MCF 10A (cell line): ENCODE measurements at regions of chr18 and their contacts with region 1.

Region 1: GRCh38 chr18:49784427-49785185 is 28.7 kb downstream of the ACAA2 start:
- DNase-seq: no peak
- H3K4me3 Mint-ChIP-seq: no peak overlapping the region
- H3K27ac Mint-ChIP-seq: no peak overlapping the region
- H3K4me1 Mint-ChIP-seq: peaks cover 14% of the 10 kb centered on the region
- H3K27me3 Mint-ChIP-seq: no peaks in the 10 kb centered on the region
- CTCF ChIP-seq: peak; percentile 31

Region 2: DNA sequence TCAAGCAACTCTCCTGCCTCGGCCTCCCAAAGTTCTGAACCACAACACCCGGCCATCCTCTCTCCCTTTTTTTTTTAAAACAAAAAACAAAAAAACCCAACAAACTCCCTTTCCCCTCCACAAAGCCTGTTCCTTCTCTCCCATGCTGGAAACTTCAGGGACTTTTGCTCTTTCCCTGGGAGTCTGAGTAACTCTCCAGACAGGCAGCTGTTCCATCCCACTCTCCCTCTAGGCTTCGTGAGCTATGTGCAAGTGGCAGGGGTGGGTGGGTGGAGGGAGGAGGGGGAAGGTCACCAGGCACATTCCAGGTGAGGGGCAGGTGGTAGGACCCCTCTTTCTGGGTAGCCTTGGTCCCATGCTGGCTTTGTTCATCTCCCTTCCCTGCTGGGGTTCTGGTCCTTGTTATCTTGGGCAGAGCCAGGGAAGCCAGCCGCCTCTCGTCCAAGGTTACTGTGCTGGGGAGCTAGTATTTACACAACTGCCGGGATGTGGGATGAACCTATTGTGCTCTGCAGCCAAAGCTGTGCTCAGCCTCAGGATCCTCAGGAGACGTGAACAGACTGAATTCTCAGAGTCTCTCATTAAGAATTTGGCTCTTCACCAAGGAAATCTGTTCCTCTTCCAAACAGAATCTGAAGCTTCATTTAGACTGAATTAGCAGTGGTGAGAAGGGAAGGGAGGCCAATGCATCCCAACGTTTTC is 115.9 kb before region 1 on chr18:
- CTCF ChIA-PET with region 1: no interaction called
- POLR2A ChIA-PET with region 1: no interaction called
- intact Hi-C with region 1: no loop called
- DNase-seq: no peak
- H3K4me3 Mint-ChIP-seq: no peak overlapping the region
- H3K27ac Mint-ChIP-seq: no peak overlapping the region
- H3K4me1 Mint-ChIP-seq: peaks cover 11% of the 10 kb centered on the region
- H3K27me3 Mint-ChIP-seq: no peaks in the 10 kb centered on the region
- CTCF ChIP-seq: no peak

Region 3: DNA sequence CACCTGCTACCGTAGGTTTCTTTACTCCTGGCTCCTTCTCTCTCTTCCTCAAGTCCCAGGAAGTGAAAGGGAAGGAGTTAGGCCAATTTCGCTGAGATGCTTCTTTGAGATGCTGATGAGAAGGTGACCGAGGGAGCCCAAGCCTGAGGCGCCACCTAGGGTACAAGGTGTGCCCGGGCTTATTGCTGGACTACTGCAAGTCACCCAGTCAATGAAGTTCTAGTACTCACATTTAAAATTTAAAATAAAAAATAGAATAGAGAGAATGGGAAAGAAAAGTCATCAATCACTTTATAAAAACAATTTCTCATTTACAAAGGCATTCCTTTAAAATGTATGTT is 16.6 kb before region 1 on chr18:
- CTCF ChIA-PET with region 1: interaction called, 18 read pairs
- POLR2A ChIA-PET with region 1: no interaction called
- intact Hi-C with region 1: no loop called
- DNase-seq: peak; percentile 62
- H3K4me3 Mint-ChIP-seq: no peak overlapping the region
- H3K27ac Mint-ChIP-seq: no peak overlapping the region
- H3K4me1 Mint-ChIP-seq: no peaks in the 10 kb centered on the region
- H3K27me3 Mint-ChIP-seq: no peaks in the 10 kb centered on the region
- CTCF ChIP-seq: peak; percentile 82